ENCODE measurements at regions of chr1 and their contacts with region 1.

Region 1: DNA sequence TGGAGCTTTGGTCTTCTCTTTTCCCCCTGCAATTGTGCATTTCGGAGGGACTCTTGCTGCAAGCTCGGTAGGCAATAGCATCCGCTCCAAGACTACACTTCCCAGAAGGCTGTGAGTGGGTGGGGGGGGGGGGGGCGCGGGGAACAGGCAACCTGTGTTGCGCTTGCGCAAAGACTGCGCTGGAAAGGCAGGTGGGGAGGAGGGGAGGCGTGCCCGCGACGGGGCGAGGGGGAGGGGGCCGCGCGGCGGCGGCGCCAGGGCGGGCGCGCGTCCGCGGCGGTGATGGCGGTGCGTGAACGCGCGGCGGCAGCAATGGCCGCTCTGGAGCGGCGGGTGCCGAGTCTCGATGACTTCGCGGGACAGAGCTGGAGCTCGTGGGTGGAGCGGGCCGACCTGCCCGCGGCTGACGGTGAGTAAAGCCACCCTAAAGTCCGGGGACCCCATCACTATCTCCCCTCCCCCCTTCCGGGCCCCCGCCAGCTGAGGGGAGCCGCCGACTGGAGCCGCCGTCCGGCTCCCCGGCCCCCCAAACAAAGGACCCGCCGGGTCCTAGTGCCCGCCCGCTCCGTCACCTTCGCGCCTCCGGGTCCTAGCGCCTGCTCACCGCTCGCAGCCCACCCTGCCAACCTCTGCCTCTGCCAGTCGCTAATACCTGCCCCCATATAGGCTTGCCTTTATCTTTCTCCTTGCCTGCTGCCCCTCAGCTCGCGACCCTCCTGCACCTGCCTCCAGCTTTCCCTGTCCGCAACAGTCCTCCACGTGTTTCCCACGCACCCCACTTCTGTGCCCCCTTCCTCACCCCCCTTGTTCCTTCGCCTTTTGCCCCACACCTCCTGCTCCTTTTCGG is at the start of gene ATXN7L2:
- DNase-seq: peak; percentile 96
- ATAC-seq: peak; percentile 79
- H3K4me3 Mint-ChIP-seq: peak within 1 kb of the TSS; percentile 88
- H3K27ac Mint-ChIP-seq: peak within 1 kb of the TSS; percentile 96
- H3K4me1 Mint-ChIP-seq: peaks cover 33% of the 10 kb centered on the region
- H3K27me3 Mint-ChIP-seq: no peaks in the 10 kb centered on the region
- total RNA-seq, gene ATXN7L2: 11.7 to 13.0 TPM

Region 2: DNA sequence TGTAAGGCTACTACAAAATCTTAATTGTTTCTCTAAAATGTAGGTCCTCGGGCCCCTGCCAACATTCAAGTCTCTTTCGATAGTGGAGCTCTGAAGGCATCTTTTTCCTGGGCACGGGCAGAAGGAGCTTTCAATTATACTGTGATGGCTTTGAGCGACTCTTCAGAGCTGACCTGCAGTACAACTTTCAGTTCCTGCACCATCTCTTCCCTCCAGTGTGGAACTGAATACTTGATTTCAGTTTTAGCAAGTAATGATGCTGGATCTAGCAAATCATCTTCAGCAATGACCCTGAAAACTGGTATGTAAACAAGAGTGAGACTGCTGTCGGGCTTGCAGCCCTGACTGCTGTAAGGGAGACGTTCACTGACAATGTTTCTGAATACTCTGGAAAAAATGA is 761.6 kb before region 1 on chr1:
- CTCF ChIA-PET with region 1: no interaction called
- POLR2A ChIA-PET with region 1: no interaction called
- intact Hi-C with region 1: no loop called
- DNase-seq: no peak
- ATAC-seq: no peak
- H3K4me3 Mint-ChIP-seq: no peak overlapping the region
- H3K27ac Mint-ChIP-seq: no peak overlapping the region
- H3K4me1 Mint-ChIP-seq: peaks cover 3% of the 10 kb centered on the region
- H3K27me3 Mint-ChIP-seq: no peaks in the 10 kb centered on the region

Region 3: DNA sequence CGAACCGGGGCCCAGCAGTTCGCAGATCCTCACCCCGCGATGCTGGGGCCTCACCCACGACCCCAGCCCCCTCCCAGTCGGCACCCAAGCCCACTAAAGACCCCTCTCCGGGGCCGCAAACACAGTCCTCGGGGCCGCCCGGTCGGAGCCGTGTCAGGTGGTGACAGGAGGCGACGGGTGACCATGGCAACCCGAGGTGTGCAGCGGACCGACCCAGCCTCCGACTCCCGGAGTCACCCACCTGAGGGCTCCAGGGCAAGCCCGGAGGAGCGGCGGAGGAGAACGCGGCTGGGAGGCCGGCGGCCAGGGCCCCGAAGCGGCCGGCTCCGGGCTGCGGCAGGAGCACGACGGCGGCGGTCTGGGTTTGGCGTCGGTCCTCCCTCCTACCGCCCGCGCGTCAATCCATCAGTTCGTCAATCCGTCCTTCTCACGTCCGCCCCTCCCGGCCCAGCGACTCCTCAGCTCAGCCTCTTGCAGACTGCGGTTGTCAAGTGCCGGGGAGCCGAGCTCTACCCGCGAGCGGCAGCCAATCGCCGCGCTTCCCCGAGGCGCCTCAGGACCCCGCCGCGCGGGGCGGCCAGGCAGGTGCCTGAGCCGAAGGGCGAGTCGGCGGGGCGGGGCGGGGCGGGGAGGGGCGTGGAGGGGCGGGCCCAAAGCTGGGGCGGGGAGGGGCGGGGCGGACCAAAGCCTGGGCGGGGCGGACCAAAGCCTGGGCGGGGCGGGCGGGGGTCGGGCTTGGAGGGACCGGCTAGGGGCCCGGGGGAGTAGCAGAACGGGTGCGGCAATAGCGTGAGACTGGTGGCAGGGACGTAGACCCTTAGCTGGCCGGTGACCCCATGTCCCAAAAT is 442.1 kb before region 1 on chr1 and contains the start of gene WDR47:
- CTCF ChIA-PET with region 1: no interaction called
- POLR2A ChIA-PET with region 1: no interaction called
- intact Hi-C with region 1: loop called in 1 of 2 experiments (anchors 5 kb)
- DNase-seq: peak; percentile 98
- ATAC-seq: peak; percentile 99
- H3K4me3 Mint-ChIP-seq: peak within 1 kb of the TSS; percentile 82
- H3K27ac Mint-ChIP-seq: peak within 1 kb of the TSS; percentile 65
- H3K4me1 Mint-ChIP-seq: peaks cover 16% of the 10 kb centered on the region
- H3K27me3 Mint-ChIP-seq: no peaks in the 10 kb centered on the region
- total RNA-seq, gene WDR47: 6.9 to 7.6 TPM

Region 4: DNA sequence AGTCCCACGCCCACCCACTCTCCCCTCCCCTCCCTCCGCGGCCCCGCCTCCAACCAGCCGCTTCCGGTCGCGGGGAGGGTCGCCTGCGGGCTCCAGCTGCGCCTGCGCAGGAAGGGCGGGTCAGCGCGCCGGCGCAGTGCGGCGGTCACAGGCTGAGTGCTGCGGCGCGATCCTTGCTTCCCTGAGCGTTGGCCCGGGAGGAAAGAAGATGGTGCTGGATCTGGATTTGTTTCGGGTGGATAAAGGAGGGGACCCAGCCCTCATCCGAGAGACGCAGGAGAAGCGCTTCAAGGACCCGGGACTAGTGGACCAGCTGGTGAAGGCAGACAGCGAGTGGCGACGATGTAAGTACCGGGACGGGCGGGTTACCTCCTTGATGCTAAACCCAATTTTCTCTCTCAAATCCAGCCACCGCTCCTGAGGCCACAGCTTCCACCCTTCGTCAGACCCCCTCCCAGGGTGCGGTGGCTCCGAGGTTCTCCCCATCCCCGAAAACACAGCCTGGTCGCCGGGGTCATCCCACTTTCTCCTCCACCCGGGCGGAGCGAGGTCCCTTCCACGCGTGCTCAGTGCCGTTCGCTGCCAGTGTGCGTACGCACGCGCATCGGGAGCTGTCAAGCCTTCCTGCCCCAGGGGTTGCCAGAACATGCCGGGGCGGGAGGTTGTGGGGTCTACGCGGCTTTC is 270.0 kb before region 1 on chr1 and contains the start of gene SARS1:
- CTCF ChIA-PET with region 1: interaction called, 3 read pairs
- POLR2A ChIA-PET with region 1: no interaction called
- intact Hi-C with region 1: loop called in 1 of 2 experiments (anchors 2 kb)
- DNase-seq: peak; percentile 93
- ATAC-seq: peak; percentile 85
- H3K4me3 Mint-ChIP-seq: peak within 1 kb of the TSS; percentile 97
- H3K27ac Mint-ChIP-seq: peak within 1 kb of the TSS; percentile 95
- H3K4me1 Mint-ChIP-seq: peaks cover 32% of the 10 kb centered on the region
- H3K27me3 Mint-ChIP-seq: peaks cover 1% of the 10 kb centered on the region
- total RNA-seq, gene SARS1: 224 to 240 TPM

Region 5: GRCh38 chr1:109282952-109283747 is 200.7 kb before region 1 on chr1 and contains the start of gene PSRC1:
- CTCF ChIA-PET with region 1: no interaction called
- POLR2A ChIA-PET with region 1: interaction called, 3 read pairs
- intact Hi-C with region 1: loop called in 1 of 2 experiments (anchors 1 kb)
- DNase-seq: peak; percentile 95
- ATAC-seq: peak; percentile 98
- H3K4me3 Mint-ChIP-seq: peak within 1 kb of the TSS; percentile 86
- H3K27ac Mint-ChIP-seq: peak within 1 kb of the TSS; percentile 90
- H3K4me1 Mint-ChIP-seq: peaks cover 11% of the 10 kb centered on the region
- H3K27me3 Mint-ChIP-seq: no peaks in the 10 kb centered on the region
- total RNA-seq, gene PSRC1: 17.6 to 18.4 TPM

Region 6: DNA sequence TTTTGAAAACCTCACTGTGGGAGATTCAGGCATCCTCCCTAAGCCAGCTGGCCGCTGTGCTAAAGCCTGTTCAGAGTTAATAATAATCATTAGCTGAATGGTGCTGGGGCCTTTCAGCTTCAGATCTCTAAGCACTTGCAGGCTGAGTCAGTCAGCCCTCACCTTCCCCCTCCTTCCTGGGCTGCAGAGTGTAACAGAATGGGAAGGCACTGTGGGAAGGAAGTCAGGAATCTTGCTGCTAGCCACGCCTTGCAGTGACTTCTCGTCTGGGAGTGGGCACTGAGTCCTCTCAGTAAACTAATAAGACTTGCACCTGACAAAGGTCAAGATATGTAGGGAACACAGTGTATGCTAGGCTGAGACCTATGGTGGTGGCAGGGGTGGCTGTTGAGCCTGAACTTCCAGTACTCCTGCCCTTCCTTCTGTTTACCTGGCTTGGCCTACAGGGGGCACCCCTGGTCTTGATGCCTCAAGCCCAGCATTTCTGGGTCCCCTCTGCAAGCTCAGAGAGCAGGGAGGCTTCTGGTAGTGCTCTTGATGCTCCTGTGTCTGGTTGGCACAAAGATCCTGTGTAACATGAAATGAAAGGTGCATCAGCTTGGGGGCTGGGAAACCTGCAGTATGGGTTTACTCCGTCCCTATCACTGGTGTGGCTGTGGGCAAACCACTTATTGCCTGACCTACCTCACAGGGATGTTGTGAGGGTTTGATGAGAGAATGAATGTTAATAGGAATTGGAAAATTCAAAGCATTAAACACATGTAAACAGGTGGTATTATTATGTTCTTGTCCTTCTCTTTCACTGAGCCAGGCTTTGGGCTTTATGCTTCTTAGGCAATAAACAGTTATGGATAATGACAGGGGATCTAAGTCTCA is 16.0 kb after region 1 on chr1:
- CTCF ChIA-PET with region 1: interaction called, 16 read pairs
- POLR2A ChIA-PET with region 1: no interaction called
- intact Hi-C with region 1: no loop called
- DNase-seq: peak; percentile 75
- ATAC-seq: peak; percentile 66
- H3K4me3 Mint-ChIP-seq: no peak overlapping the region
- H3K27ac Mint-ChIP-seq: peak overlapping the region; percentile 67
- H3K4me1 Mint-ChIP-seq: peaks cover 89% of the 10 kb centered on the region
- H3K27me3 Mint-ChIP-seq: no peaks in the 10 kb centered on the region

Region 7: DNA sequence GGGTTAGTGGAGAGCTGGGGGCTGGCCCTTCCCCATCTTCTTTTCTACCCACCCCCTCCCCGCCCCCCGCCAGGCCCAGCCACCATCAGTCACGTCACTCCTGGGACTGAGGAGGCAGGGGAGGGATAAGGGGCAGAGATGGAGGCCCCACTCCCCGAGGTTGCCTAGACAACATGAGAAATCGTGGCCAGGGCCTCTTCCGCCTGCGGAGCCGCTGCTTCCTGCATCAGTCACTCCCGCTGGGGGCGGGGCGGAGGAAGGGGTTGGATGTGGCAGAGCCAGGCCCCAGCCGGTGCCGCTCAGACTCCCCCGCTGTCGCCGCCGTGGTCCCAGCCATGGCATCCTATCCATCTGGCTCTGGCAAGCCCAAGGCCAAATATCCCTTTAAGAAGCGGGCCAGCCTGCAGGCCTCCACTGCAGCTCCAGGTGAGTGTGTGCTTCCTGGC is 137.0 kb after region 1 on chr1:
- CTCF ChIA-PET with region 1: interaction called, 4 read pairs
- POLR2A ChIA-PET with region 1: no interaction called
- intact Hi-C with region 1: loop called (anchors 2 to 5 kb)
- DNase-seq: peak; percentile 99
- ATAC-seq: peak; percentile 86
- H3K4me3 Mint-ChIP-seq: peak overlapping the region; percentile 97
- H3K27ac Mint-ChIP-seq: peak overlapping the region; percentile 97
- H3K4me1 Mint-ChIP-seq: peaks cover 60% of the 10 kb centered on the region
- H3K27me3 Mint-ChIP-seq: no peaks in the 10 kb centered on the region

Measured in activated CD4-positive, alpha-beta T cell treated with anti-CD3 and anti-CD28 coated beads for 36 hours (primary cell).